ENCODE measurements at regions of chr14 and their contacts with region 1.

Region 1: DNA sequence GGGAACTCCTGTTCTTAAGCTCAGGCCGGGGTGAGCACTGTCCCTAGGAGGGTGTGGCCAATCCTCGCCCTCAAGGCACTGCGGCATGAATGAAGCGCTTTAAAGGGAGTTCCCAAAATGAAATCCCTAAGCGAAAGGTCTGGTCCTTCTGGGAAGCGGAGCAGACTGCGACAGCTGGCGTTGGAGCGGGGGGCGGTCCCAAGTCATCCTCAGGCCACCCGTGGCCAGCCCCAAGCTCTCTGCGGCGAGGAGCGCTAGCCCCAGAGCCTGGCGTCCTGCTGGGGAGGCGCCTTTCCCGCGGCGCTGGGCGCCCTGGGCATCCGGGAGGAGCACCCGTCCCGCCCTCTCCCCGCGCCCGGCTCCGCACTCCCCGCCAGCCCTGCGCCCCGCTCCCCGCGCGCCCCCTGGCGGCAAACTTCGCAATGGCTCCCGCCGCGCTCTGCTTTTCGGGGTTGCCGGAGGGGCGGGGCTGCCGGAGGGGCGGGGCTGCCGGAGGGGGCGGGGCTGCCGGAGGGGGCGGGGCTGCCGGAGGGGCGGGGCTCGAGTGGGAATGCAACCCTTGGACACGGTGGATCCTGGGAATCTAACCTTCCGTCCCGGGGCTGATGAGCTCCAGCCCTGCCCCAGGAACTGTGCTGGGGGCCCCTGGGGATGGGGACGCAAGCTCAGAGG is 25.4 kb downstream of the ZBTB42 start:
- DNase-seq: peak; percentile 94
- ATAC-seq: peak; percentile 95
- H3K4me3 Mint-ChIP-seq: peak overlapping the region; percentile 57
- H3K27ac Mint-ChIP-seq: no peak overlapping the region
- H3K4me1 Mint-ChIP-seq: peaks cover 14% of the 10 kb centered on the region
- H3K27me3 Mint-ChIP-seq: peaks cover 29% of the 10 kb centered on the region

Region 2: DNA sequence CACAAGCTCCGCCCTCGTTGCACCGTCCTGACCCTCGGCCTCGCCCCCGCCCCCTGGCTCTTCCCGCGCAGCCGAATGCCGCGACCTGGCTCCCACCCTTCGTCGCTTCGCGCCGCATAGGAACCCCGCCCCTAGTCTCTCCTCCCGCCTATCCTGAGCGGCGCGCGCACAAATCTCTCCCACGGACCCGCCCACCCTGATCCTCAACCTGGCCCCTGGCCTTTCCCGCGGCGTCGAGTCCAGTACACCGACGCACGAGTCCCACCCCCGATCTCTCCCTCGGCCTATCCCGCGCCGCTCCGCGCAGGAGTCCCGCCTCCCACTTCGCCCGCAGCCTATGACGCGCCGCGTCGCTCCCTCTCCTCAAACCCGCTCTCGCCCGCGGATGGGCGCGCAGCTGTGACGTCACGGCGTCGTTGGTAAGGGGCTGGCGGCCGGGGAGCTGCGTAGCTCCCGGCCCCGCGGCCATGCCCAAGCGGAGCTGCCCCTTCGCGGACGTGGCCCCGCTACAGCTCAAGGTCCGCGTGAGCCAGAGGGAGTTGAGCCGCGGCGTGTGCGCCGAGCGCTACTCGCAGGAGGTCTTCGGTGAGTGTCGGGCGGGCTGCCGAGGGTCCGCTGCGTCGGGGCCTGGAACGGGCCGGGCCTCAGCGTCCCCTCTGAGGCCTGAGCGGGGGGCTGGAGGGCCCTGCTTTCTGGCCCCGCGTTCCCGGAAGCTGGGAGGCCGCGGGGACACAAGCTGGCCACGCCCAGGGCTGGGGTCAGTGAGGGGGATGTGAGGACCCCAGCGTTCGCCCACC is 73.4 kb before region 1 on chr14 and contains the start of gene SIVA1:
- CTCF ChIA-PET with region 1: interaction called, 20 read pairs
- DNase-seq: peak; percentile 100
- ATAC-seq: peak; percentile 94
- H3K4me3 Mint-ChIP-seq: peak within 1 kb of the TSS; percentile 87
- H3K27ac Mint-ChIP-seq: peak within 1 kb of the TSS; percentile 89
- H3K4me1 Mint-ChIP-seq: peaks cover 45% of the 10 kb centered on the region
- H3K27me3 Mint-ChIP-seq: no peaks in the 10 kb centered on the region
- total RNA-seq, gene SIVA1: 127 to 140 TPM

Region 3: DNA sequence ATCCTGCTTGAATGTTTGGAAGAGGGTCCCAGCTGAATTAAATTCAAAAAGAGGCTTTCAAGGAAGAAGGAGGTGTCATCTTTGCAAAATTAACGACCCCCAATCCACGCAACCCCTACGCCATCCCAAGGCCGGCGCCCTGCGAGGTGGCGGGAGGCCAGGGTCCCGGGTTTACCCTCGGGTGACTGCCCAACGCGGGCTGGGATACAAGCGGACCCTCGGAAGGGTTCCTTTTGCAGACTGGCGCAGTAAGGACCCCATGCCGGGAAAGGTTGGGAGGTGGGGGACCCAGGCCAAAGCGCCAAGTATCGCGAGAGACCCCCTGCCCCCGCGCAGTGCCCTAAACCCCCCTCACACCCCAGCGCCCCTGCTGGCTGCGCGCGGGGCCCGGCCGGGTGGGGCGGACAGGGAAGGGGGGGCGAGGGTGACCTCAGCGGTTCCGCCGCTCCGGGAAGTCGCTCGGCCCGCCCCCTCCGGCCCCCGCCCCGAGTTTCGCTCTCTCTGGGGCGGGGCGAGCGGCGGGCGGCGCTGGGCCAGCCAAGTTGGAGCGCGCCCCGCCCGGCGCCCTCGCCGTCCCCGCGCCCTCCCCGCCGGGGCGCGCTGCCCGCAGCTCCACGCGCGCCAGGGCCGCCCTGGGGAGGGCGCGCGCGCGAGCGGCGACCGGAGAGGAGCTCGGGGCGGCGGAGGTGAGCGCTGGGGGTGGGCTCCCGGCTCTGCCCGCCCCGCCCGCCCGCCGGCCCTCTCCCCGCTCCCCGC is 26.1 kb before region 1 on chr14:
- CTCF ChIA-PET with region 1: interaction called, 15 read pairs
- DNase-seq: peak; percentile 86
- ATAC-seq: peak; percentile 73
- H3K4me3 Mint-ChIP-seq: peak overlapping the region; percentile 39
- H3K27ac Mint-ChIP-seq: peak overlapping the region; percentile 42
- H3K4me1 Mint-ChIP-seq: peaks cover 23% of the 10 kb centered on the region
- H3K27me3 Mint-ChIP-seq: peaks cover 6% of the 10 kb centered on the region

Region 4: DNA sequence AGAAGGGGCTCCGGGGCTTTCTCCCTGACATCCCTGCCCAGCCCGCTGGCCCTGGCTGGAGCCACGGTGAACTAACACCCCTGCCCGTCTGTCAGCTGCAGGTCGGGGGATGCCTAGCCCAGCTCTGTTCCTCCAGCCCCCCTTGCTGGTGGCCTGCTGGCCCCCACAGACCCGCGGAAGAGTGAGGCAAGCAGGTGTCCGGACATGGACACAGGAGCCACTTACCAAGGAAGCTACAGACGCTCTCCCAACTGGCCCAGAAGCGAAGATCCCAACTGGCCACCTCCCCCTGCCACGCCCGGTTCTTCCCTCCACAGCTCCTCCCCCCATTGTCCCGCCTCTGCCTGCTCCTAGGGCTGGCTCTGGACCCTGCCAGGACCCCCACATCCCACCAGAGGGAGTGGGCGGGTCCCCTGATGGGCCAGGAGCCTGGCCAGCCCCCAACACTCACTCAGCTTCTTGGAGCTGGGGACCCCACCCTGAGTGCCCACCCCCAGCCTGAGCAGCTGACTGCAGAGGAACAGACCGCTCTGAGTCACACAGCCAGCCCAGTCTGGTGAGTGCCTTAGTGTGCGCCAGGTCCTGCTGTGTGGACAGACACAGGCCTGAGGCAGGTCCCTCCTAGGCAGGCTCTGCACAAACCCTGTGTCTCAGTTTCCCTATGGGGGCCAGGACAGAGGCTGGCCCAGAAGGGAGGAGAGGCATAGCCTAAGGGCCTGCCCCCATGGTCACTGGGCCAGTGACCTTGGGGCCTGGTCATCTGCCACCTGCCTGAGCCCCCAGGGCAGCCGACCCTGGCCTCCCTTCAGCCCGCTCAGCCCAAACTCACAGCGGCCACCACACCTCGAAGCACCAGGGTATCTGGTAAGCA is 144.1 kb after region 1 on chr14:
- CTCF ChIA-PET with region 1: no interaction called
- DNase-seq: no peak
- ATAC-seq: no peak
- H3K4me3 Mint-ChIP-seq: no peak overlapping the region
- H3K27ac Mint-ChIP-seq: no peak overlapping the region
- H3K4me1 Mint-ChIP-seq: peaks cover 2% of the 10 kb centered on the region
- H3K27me3 Mint-ChIP-seq: peaks cover 15% of the 10 kb centered on the region

Measured in activated CD8-positive, alpha-beta memory T cell treated with anti-CD3 and anti-CD28 coated beads, Interleukin-2, amount 10 ng/mL, durations not matched to agents 7 days and 5 days (primary cell).